Activated B cell treated with CpG ODN at 0.5 μM for 24 hours (primary cell): ENCODE measurements at regions of chr17 and their contacts with region 1.

Region 1: DNA sequence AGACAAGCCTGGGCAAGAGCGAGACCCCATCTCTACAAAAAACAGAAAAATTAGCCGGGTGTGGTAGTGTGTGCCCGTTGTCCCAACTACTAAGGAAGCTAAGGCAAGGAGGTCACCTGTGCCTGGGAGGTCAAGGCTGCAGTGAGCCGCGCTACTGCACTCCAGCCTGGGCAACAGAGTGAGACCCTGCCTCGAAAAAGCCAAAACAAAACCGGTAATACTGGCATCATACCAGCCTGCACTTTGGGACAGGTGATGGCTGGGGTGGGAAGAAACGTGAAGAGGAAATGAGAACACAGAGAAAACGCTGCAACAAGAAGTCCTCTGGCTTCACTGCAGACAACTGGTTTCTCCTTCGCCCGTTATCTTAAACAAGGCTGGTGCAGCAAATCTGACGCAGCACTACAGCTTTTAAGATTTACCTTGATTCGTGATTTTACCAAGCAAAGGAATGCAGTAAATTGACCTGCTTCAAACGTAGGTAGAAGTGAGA is 725 bp upstream of the CASC3 start:
- DNase-seq: peak; percentile 20
- ATAC-seq: peak; percentile 19
- H3K4me3 Mint-ChIP-seq: peak overlapping the region; percentile 93
- H3K27ac Mint-ChIP-seq: peak overlapping the region; percentile 92
- H3K4me1 Mint-ChIP-seq: peaks cover 29% of the 10 kb centered on the region
- H3K27me3 Mint-ChIP-seq: no peaks in the 10 kb centered on the region
- CTCF ChIP-seq: no peak

Region 2: GRCh38 chr17:39952680-39953470 is 186.7 kb before region 1 on chr17:
- CTCF ChIA-PET with region 1: no interaction called
- POLR2A ChIA-PET with region 1: interaction called, 3 read pairs
- intact Hi-C with region 1: loop called (anchors 1 kb)
- DNase-seq: peak; percentile 88
- ATAC-seq: peak; percentile 85
- H3K4me3 Mint-ChIP-seq: peak overlapping the region; percentile 85
- H3K27ac Mint-ChIP-seq: peak overlapping the region; percentile 83
- H3K4me1 Mint-ChIP-seq: peaks cover 29% of the 10 kb centered on the region
- H3K27me3 Mint-ChIP-seq: no peaks in the 10 kb centered on the region
- CTCF ChIP-seq: no peak

Region 3: GRCh38 chr17:40121181-40122135 is 18.2 kb before region 1 on chr17 and contains the start of gene MSL1:
- CTCF ChIA-PET with region 1: interaction called, 3 read pairs
- POLR2A ChIA-PET with region 1: interaction called, 87 read pairs
- intact Hi-C with region 1: loop called (anchors 1 kb)
- DNase-seq: peak; percentile 84
- ATAC-seq: peak; percentile 68
- H3K4me3 Mint-ChIP-seq: peak within 1 kb of the TSS; percentile 82
- H3K27ac Mint-ChIP-seq: peak within 1 kb of the TSS; percentile 50
- H3K4me1 Mint-ChIP-seq: peaks cover 39% of the 10 kb centered on the region
- H3K27me3 Mint-ChIP-seq: no peaks in the 10 kb centered on the region
- CTCF ChIP-seq: no peak
- total RNA-seq, gene MSL1: 84.5 and 101 TPM in 2 replicates

Region 4: GRCh38 chr17:40182606-40183005 is 43.0 kb after region 1 on chr17:
- CTCF ChIA-PET with region 1: no interaction called
- POLR2A ChIA-PET with region 1: no interaction called
- intact Hi-C with region 1: no loop called
- DNase-seq: no peak
- ATAC-seq: no peak
- H3K4me3 Mint-ChIP-seq: no peak overlapping the region
- H3K27ac Mint-ChIP-seq: no peak overlapping the region
- H3K4me1 Mint-ChIP-seq: peaks cover 3% of the 10 kb centered on the region
- H3K27me3 Mint-ChIP-seq: no peaks in the 10 kb centered on the region
- CTCF ChIP-seq: no peak

Region 5: GRCh38 chr17:40219073-40219860 is 79.7 kb after region 1 on chr17 and contains the start of gene WIPF2:
- CTCF ChIA-PET with region 1: interaction called, 3 read pairs
- POLR2A ChIA-PET with region 1: interaction called, 14 read pairs
- intact Hi-C with region 1: loop called (anchors 1 kb)
- DNase-seq: peak; percentile 92
- ATAC-seq: peak; percentile 88
- H3K4me3 Mint-ChIP-seq: peak within 1 kb of the TSS; percentile 97
- H3K27ac Mint-ChIP-seq: peak within 1 kb of the TSS; percentile 100
- H3K4me1 Mint-ChIP-seq: peaks cover 30% of the 10 kb centered on the region
- H3K27me3 Mint-ChIP-seq: no peaks in the 10 kb centered on the region
- CTCF ChIP-seq: no peak
- total RNA-seq, gene WIPF2: 28.4 and 32.9 TPM in 2 replicates

Region 6: DNA sequence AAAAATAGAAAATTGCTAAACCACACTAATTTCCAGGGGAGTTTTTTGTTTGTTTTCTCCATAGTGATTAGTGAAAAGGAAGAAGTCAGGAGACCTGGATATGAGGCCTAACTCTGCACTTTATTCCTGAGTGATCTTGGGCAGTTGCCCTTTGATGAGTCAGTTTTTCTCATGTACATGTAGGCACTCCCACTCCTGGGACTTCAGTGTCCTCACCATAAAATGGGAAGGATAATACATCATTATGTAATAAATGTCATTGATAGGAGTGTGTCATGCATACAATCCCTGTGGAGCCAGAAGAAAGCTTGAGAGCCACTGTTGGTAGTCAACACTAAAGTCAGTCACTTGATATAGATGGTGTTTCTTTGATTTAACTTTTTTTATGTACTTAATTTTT is 112.0 kb after region 1 on chr17:
- CTCF ChIA-PET with region 1: no interaction called
- POLR2A ChIA-PET with region 1: no interaction called
- intact Hi-C with region 1: no loop called
- DNase-seq: no peak
- ATAC-seq: no peak
- H3K4me3 Mint-ChIP-seq: no peak overlapping the region
- H3K27ac Mint-ChIP-seq: no peak overlapping the region
- H3K4me1 Mint-ChIP-seq: peaks cover 12% of the 10 kb centered on the region
- H3K27me3 Mint-ChIP-seq: no peaks in the 10 kb centered on the region
- CTCF ChIP-seq: no peak